ENCODE measurements at regions of chr1 and their contacts with region 1.

Region 1: GRCh38 chr1:63683759-63684158 is 90.1 kb upstream of the ROR1 start:
- DNase-seq: no peak
- ATAC-seq: no peak
- H3K4me3 ChIP-seq: no peak overlapping the region
- H3K27ac ChIP-seq: no peak overlapping the region
- H3K4me1 ChIP-seq: no peaks in the 10 kb centered on the region
- H3K27me3 ChIP-seq: no peaks in the 10 kb centered on the region
- CTCF ChIP-seq: no peak

Region 2: GRCh38 chr1:63615768-63616420 is 67.9 kb before region 1 on chr1:
- intact Hi-C with region 1: loop called in 1 of 2 experiments (anchors 5 kb)
- DNase-seq: peak; percentile 26 to 54
- ATAC-seq: peak; percentile 61 to 74 (median 68)
- H3K4me3 ChIP-seq: no peak overlapping the region
- H3K27ac ChIP-seq: peak overlapping the region; percentile 81
- H3K4me1 ChIP-seq: peaks cover 77% of the 10 kb centered on the region
- H3K27me3 ChIP-seq: no peaks in the 10 kb centered on the region
- CTCF ChIP-seq: peak; percentile 85

Measured in psoas muscle (tissue), 8 donors.